PC-3 (cell line): ENCODE measurements at regions of chr2 and their contacts with region 1.

Region 1: DNA sequence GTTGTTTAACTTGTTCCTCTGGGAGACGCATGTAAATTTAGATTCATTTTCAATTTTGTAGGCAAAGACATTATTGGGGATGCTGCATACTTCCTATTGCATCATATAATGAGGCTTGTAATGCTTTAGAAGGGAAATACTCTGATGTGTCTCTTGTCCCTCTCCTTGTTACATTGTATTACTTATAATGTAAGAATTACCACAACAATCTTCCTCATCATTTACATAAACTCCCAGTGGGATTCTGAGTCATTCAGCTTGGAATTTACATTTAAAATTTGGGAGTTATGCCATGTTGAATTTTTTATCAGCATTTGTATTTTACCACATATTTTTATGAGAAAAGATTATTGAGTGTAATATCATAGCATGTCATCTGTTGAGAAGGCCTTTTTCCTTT is 963.4 kb upstream of the NRXN1 start:
- DNase-seq: peak; percentile 75
- ATAC-seq: peak; percentile 81
- H3K4me3 ChIP-seq: no peak overlapping the region
- H3K27ac ChIP-seq: peak overlapping the region; percentile 38
- H3K4me1 ChIP-seq: peaks cover 13% of the 10 kb centered on the region
- H3K27me3 ChIP-seq: no peaks in the 10 kb centered on the region
- CTCF ChIP-seq: no peak

Region 2: DNA sequence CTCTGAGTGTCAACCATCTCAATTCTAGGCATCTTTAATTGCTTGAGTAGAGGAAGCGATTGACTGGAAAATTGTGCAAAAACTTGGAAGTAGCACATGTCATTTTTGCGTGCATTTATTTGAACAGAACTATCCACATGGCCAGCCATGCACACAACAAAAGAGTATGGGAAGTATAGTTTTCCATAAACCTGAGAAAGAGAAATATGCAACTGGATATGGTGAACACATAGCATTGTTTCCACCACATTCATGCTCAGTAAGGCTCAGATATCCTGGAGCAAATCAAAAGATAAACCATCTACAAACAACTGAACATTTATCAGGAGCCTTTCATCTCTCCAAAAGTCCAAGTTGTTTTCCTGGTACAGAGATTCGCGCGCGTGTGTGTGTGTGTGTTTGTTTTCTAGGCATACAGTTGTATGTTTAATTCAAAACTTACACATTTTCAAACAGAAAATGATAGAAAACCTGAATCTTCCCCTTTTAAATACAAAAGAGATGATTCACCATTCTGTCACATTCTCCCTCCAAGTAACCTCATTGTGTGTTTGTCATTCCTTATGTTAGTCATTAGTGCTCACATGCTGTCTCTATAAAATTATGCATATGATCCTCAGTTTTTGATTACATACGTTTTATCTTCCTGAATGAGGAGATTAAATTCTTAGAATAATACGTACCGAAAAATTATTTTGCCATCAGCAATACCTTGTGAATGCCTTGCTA is 183.0 kb before region 1 on chr2:
- CTCF ChIA-PET with region 1: no interaction called
- POLR2A ChIA-PET with region 1: no interaction called
- intact Hi-C with region 1: loop called (anchors 2 kb)
- DNase-seq: peak; percentile 83
- ATAC-seq: peak; percentile 77
- H3K4me3 ChIP-seq: peak overlapping the region; percentile 61
- H3K27ac ChIP-seq: peak overlapping the region; percentile 92
- H3K4me1 ChIP-seq: peaks cover 28% of the 10 kb centered on the region
- H3K27me3 ChIP-seq: no peaks in the 10 kb centered on the region
- CTCF ChIP-seq: no peak

Region 3: GRCh38 chr2:51866361-51866760 is 128.9 kb before region 1 on chr2:
- CTCF ChIA-PET with region 1: no interaction called
- POLR2A ChIA-PET with region 1: no interaction called
- intact Hi-C with region 1: loop called (anchors 5 kb)
- DNase-seq: peak; percentile 16
- ATAC-seq: no peak
- H3K4me3 ChIP-seq: no peak overlapping the region
- H3K27ac ChIP-seq: no peak overlapping the region
- H3K4me1 ChIP-seq: peaks cover 7% of the 10 kb centered on the region; the same call in 1 of the 2 replicates
- H3K27me3 ChIP-seq: no peaks in the 10 kb centered on the region
- CTCF ChIP-seq: no peak

Region 4: GRCh38 chr2:51919395-51919794 is 75.9 kb before region 1 on chr2:
- CTCF ChIA-PET with region 1: no interaction called
- POLR2A ChIA-PET with region 1: no interaction called
- intact Hi-C with region 1: loop called (anchors 5 kb)
- DNase-seq: peak; percentile 82
- ATAC-seq: peak; percentile 59
- H3K4me3 ChIP-seq: no peak overlapping the region
- H3K27ac ChIP-seq: no peak overlapping the region
- H3K4me1 ChIP-seq: peaks cover 33% of the 10 kb centered on the region
- H3K27me3 ChIP-seq: no peaks in the 10 kb centered on the region
- CTCF ChIP-seq: no peak

Region 5: DNA sequence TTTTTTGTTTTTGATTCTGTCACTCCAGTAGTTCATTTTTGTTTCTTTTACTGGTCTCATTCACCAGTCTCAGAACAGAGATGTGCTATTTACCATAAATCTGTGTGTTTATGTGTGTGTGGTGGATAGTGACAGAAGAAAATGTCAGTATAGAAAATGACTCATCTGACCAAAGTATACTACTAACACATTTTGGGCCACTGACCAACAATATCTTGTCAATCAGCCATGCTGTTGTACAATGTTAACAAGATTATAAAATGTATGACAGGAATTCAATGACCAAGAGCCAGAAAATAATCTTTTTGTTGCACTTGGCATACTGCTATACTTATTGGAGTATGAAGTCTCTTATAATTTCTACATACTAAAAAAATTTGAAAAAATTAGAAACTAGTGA is 118.0 kb after region 1 on chr2:
- CTCF ChIA-PET with region 1: no interaction called
- POLR2A ChIA-PET with region 1: no interaction called
- intact Hi-C with region 1: loop called (anchors 5 kb)
- DNase-seq: peak; percentile 78
- ATAC-seq: peak; percentile 70
- H3K4me3 ChIP-seq: no peak overlapping the region
- H3K27ac ChIP-seq: no peak overlapping the region
- H3K4me1 ChIP-seq: peaks cover 12% of the 10 kb centered on the region; the same call in 1 of the 2 replicates
- H3K27me3 ChIP-seq: no peaks in the 10 kb centered on the region
- CTCF ChIP-seq: no peak

Region 6: DNA sequence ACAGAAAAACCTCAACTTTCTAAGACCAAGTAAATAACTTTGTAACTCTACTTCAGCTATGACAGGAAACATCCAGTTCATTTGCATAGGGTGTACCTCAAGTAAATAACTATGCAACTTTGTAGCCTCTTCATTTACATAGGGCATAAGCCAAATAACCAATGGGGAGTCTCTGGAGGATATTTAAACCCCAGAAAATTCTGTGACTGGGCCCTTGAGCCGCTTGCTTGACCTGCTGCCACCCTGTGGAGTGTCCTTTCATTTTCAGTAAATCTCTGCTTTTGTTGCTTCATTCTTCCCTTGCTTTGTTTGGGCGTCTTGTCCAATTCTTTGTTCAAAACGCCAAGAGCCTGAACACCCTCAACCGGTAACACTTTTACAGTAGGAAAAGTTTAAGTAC is 149.3 kb after region 1 on chr2:
- CTCF ChIA-PET with region 1: no interaction called
- POLR2A ChIA-PET with region 1: no interaction called
- intact Hi-C with region 1: loop called (anchors 5 kb)
- DNase-seq: no peak
- ATAC-seq: no peak
- H3K4me3 ChIP-seq: no peak overlapping the region
- H3K27ac ChIP-seq: no peak overlapping the region
- H3K4me1 ChIP-seq: peaks cover 4% of the 10 kb centered on the region; the same call in 1 of the 2 replicates
- H3K27me3 ChIP-seq: no peaks in the 10 kb centered on the region
- CTCF ChIP-seq: peak; percentile 35; the same call in 1 of the 2 replicates